Endothelial cell of umbilical vein (primary cell): ENCODE measurements at regions of chr4 and their contacts with region 1.

Region 1: GRCh38 chr4:158042591-158043030 is 130.2 kb downstream of the GASK1B start:
- DNase-seq: peak; percentile 60
- H3K4me3 ChIP-seq: no peak overlapping the region
- H3K27ac ChIP-seq: no peak overlapping the region
- H3K4me1 ChIP-seq: peaks cover 13% of the 10 kb centered on the region
- H3K27me3 ChIP-seq: no peaks in the 10 kb centered on the region
- CTCF ChIP-seq: no peak
- POLR2A ChIP-seq: no peak

Region 2: GRCh38 chr4:158056689-158057245 is 14.2 kb after region 1 on chr4:
- CTCF ChIA-PET with region 1: interaction called, 21 read pairs
- POLR2A ChIA-PET with region 1: no interaction called
- dilution Hi-C with region 1: no loop called
- intact Hi-C with region 1: no loop called
- DNase-seq: no peak
- H3K4me3 ChIP-seq: no peak overlapping the region
- H3K27ac ChIP-seq: no peak overlapping the region
- H3K4me1 ChIP-seq: no peaks in the 10 kb centered on the region
- H3K27me3 ChIP-seq: no peaks in the 10 kb centered on the region
- CTCF ChIP-seq: no peak
- POLR2A ChIP-seq: no peak